CD4-positive, alpha-beta T cell (primary cell): ENCODE measurements at regions of chr2 and their contacts with region 1.

Region 1: DNA sequence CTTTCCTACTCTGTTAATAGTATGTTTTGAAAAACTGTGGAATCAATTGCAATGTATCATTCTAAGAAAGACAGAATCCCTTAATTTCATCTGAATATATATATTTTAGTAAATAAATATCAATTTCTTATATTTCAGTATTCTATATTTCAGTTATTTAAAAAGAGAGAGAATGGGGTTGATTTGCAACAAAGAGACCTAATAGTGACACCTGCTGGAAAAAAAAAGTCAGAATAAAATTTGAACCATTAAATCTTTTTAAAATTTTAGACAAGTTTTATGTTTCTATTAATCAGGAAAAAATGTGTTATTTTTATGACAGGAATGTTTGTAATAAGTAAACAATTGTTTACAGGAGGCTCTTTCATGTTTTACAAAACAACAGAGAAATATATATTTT is 20.7 kb upstream of the CCNT2 start:
- DNase-seq: peak in 3 of 14 experiments; percentile 11 to 23 (median 18)
- ATAC-seq: no peak
- H3K4me3 ChIP-seq: no peak overlapping the region
- H3K4me3 Mint-ChIP-seq: no peak overlapping the region
- H3K27ac ChIP-seq: no peak overlapping the region
- H3K27ac Mint-ChIP-seq: no peak overlapping the region
- H3K4me1 ChIP-seq: no peaks in the 10 kb centered on the region
- H3K4me1 Mint-ChIP-seq: no peaks in the 10 kb centered on the region
- H3K27me3 ChIP-seq: no peaks in the 10 kb centered on the region
- H3K27me3 Mint-ChIP-seq: no peaks in the 10 kb centered on the region
- CTCF ChIP-seq: peak; percentile 64

Region 2: DNA sequence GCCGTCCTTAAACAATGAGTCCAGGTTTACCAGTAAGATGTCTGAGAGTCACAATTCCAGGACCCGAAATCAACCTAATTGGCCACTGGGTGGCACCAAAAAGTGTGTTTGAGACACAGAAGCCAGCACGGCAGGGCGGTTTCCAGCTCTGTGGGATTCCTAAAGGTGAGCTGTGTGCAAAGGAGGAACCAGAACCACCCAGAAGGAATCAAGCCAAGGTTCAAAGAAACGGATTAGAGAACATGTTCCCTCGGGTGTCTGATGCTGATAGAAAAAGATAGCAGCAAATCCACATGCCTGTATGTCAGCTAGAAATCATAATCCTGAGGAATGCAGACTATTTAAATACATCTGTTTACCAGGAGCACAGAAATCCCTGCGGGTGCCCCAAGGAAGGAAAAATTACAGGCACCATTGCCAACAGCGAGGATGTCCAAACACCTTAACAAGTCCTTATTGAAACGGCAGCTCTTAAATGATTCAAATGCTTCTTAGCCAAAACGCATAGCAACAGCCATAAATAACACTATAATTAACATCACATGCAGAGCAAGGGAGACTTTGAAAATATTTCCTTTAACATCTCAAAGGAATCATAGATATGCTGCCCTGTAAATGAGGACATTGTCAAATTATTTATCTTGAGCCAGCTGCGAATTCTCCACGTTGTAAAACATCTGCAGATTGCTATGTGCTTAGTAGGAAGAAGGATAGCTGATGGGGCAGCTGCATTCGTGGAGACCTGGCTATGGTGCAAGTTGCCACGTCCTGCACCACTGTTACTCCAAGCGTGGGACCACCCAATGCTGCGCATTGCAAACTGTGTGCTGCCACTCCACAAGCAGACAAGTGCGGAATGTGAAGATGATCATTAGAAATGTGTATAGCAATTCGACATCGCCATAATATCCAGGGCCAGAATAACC is 1010.9 kb before region 1 on chr2:
- CTCF ChIA-PET with region 1: no interaction called
- POLR2A ChIA-PET with region 1: no interaction called
- intact Hi-C with region 1: loop called (anchors 5 kb)
- DNase-seq: peak; percentile 14 to 68 (median 36)
- ATAC-seq: no peak
- H3K4me3 ChIP-seq: no peak overlapping the region
- H3K4me3 Mint-ChIP-seq: no peak overlapping the region
- H3K27ac ChIP-seq: no peak overlapping the region
- H3K27ac Mint-ChIP-seq: no peak overlapping the region
- H3K4me1 ChIP-seq: peaks cover 4% of the 10 kb centered on the region
- H3K4me1 Mint-ChIP-seq: no peaks in the 10 kb centered on the region
- H3K27me3 ChIP-seq: no peaks in the 10 kb centered on the region
- H3K27me3 Mint-ChIP-seq: peaks cover 23% of the 10 kb centered on the region
- CTCF ChIP-seq: peak; percentile 54

Region 3: GRCh38 chr2:134411828-134412638 is 485.9 kb before region 1 on chr2:
- CTCF ChIA-PET with region 1: no interaction called
- POLR2A ChIA-PET with region 1: no interaction called
- intact Hi-C with region 1: no loop called
- DNase-seq: peak; percentile 51 to 84 (median 62)
- ATAC-seq: peak; percentile 97
- H3K4me3 ChIP-seq: no peak overlapping the region
- H3K4me3 Mint-ChIP-seq: no peak overlapping the region
- H3K27ac ChIP-seq: no peak overlapping the region
- H3K27ac Mint-ChIP-seq: no peak overlapping the region
- H3K4me1 ChIP-seq: peaks cover 34% of the 10 kb centered on the region
- H3K4me1 Mint-ChIP-seq: peaks cover 54% of the 10 kb centered on the region
- H3K27me3 ChIP-seq: no peaks in the 10 kb centered on the region
- H3K27me3 Mint-ChIP-seq: no peaks in the 10 kb centered on the region
- CTCF ChIP-seq: peak; percentile 62

Region 4: GRCh38 chr2:134451347-134451630 is 446.6 kb before region 1 on chr2:
- CTCF ChIA-PET with region 1: interaction called, 4 read pairs
- POLR2A ChIA-PET with region 1: no interaction called
- intact Hi-C with region 1: loop called (anchors 2 to 5 kb)
- DNase-seq: no peak
- ATAC-seq: no peak
- H3K4me3 ChIP-seq: no peak overlapping the region
- H3K4me3 Mint-ChIP-seq: no peak overlapping the region
- H3K27ac ChIP-seq: no peak overlapping the region
- H3K27ac Mint-ChIP-seq: peak overlapping the region; percentile 33
- H3K4me1 ChIP-seq: no peaks in the 10 kb centered on the region
- H3K4me1 Mint-ChIP-seq: no peaks in the 10 kb centered on the region
- H3K27me3 ChIP-seq: no peaks in the 10 kb centered on the region
- H3K27me3 Mint-ChIP-seq: no peaks in the 10 kb centered on the region
- CTCF ChIP-seq: no peak

Region 5: GRCh38 chr2:134457765-134458472 is 440.0 kb before region 1 on chr2:
- CTCF ChIA-PET with region 1: interaction called, 4 read pairs
- POLR2A ChIA-PET with region 1: no interaction called
- intact Hi-C with region 1: loop called in 1 of 2 experiments (anchors 5 kb)
- DNase-seq: no peak
- ATAC-seq: no peak
- H3K4me3 ChIP-seq: no peak overlapping the region
- H3K4me3 Mint-ChIP-seq: no peak overlapping the region
- H3K27ac ChIP-seq: no peak overlapping the region
- H3K27ac Mint-ChIP-seq: no peak overlapping the region
- H3K4me1 ChIP-seq: no peaks in the 10 kb centered on the region
- H3K4me1 Mint-ChIP-seq: no peaks in the 10 kb centered on the region
- H3K27me3 ChIP-seq: no peaks in the 10 kb centered on the region
- H3K27me3 Mint-ChIP-seq: no peaks in the 10 kb centered on the region
- CTCF ChIP-seq: no peak

Region 6: DNA sequence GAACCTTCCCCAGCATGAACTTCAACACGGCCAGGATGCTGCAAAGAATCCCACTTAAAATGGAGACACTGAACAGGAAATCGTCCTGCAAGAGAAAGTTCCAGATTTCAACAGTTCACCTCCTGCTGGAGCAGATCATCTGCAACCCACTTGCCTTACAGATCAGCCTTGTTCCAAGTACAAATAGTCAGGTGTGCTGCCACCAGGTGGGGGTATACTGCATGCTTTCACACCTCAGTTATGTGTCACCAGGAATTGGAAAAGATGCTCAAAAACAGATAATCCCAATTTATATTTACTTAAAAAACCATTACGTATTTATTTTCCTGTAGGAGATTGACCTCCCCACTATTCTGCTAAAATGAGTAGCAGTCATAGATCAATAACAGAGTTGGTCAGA is 431.8 kb before region 1 on chr2:
- CTCF ChIA-PET with region 1: no interaction called
- POLR2A ChIA-PET with region 1: no interaction called
- intact Hi-C with region 1: loop called in 1 of 2 experiments (anchors 1 kb)
- DNase-seq: peak in 8 of 14 experiments; percentile 8 to 61 (median 40)
- ATAC-seq: no peak
- H3K4me3 ChIP-seq: no peak overlapping the region
- H3K4me3 Mint-ChIP-seq: no peak overlapping the region
- H3K27ac ChIP-seq: no peak overlapping the region
- H3K27ac Mint-ChIP-seq: no peak overlapping the region
- H3K4me1 ChIP-seq: no peaks in the 10 kb centered on the region
- H3K4me1 Mint-ChIP-seq: no peaks in the 10 kb centered on the region
- H3K27me3 ChIP-seq: no peaks in the 10 kb centered on the region
- H3K27me3 Mint-ChIP-seq: no peaks in the 10 kb centered on the region
- CTCF ChIP-seq: peak; percentile 23

Region 7: GRCh38 chr2:134576478-134576877 is 321.5 kb before region 1 on chr2:
- CTCF ChIA-PET with region 1: no interaction called
- POLR2A ChIA-PET with region 1: no interaction called
- intact Hi-C with region 1: loop called (anchors 1 to 2 kb)
- DNase-seq: peak in 5 of 14 experiments; percentile 12 to 54 (median 30)
- ATAC-seq: peak; percentile 26
- H3K4me3 ChIP-seq: no peak overlapping the region
- H3K4me3 Mint-ChIP-seq: no peak overlapping the region
- H3K27ac ChIP-seq: no peak overlapping the region
- H3K27ac Mint-ChIP-seq: no peak overlapping the region
- H3K4me1 ChIP-seq: no peaks in the 10 kb centered on the region
- H3K4me1 Mint-ChIP-seq: no peaks in the 10 kb centered on the region
- H3K27me3 ChIP-seq: no peaks in the 10 kb centered on the region
- H3K27me3 Mint-ChIP-seq: no peaks in the 10 kb centered on the region
- CTCF ChIP-seq: peak; percentile 34

Region 8: GRCh38 chr2:134657637-134658250 is 240.2 kb before region 1 on chr2:
- CTCF ChIA-PET with region 1: no interaction called
- POLR2A ChIA-PET with region 1: no interaction called
- intact Hi-C with region 1: loop called in 1 of 2 experiments (anchors 5 kb)
- DNase-seq: peak in 4 of 14 experiments; percentile 36 to 60 (median 53)
- ATAC-seq: no peak
- H3K4me3 ChIP-seq: no peak overlapping the region
- H3K4me3 Mint-ChIP-seq: no peak overlapping the region
- H3K27ac ChIP-seq: no peak overlapping the region
- H3K27ac Mint-ChIP-seq: no peak overlapping the region
- H3K4me1 ChIP-seq: peaks cover 3% of the 10 kb centered on the region
- H3K4me1 Mint-ChIP-seq: peaks cover 38% of the 10 kb centered on the region
- H3K27me3 ChIP-seq: no peaks in the 10 kb centered on the region
- H3K27me3 Mint-ChIP-seq: no peaks in the 10 kb centered on the region
- CTCF ChIP-seq: peak; percentile 49